Activated naive CD4-positive, alpha-beta T cell treated with anti-CD3 and anti-CD28 coated beads for 36 hours (primary cell): ENCODE measurements at regions of chr6 and their contacts with region 1.

Region 1: GRCh38 chr6:29797966-29798365 is 29.7 kb upstream of the HLA-G start:
- DNase-seq: no peak
- H3K4me3 Mint-ChIP-seq: no peak overlapping the region
- H3K27ac Mint-ChIP-seq: no peak overlapping the region
- H3K4me1 Mint-ChIP-seq: peaks cover 5% of the 10 kb centered on the region
- H3K27me3 Mint-ChIP-seq: peaks cover 12% of the 10 kb centered on the region

Region 2: GRCh38 chr6:29955783-29956182 is 157.8 kb after region 1 on chr6:
- CTCF ChIA-PET with region 1: no interaction called
- intact Hi-C with region 1: loop called (anchors 1 kb)
- DNase-seq: no peak
- H3K4me3 Mint-ChIP-seq: no peak overlapping the region
- H3K27ac Mint-ChIP-seq: no peak overlapping the region
- H3K4me1 Mint-ChIP-seq: peaks cover 15% of the 10 kb centered on the region
- H3K27me3 Mint-ChIP-seq: no peaks in the 10 kb centered on the region

Region 3: GRCh38 chr6:30013291-30013922 is 215.4 kb after region 1 on chr6:
- CTCF ChIA-PET with region 1: no interaction called
- intact Hi-C with region 1: no loop called
- DNase-seq: peak; percentile 62
- H3K4me3 Mint-ChIP-seq: no peak overlapping the region
- H3K27ac Mint-ChIP-seq: no peak overlapping the region
- H3K4me1 Mint-ChIP-seq: no peaks in the 10 kb centered on the region
- H3K27me3 Mint-ChIP-seq: peaks cover 6% of the 10 kb centered on the region